ENCODE measurements at regions of chr6 and their contacts with region 1.

Region 1: DNA sequence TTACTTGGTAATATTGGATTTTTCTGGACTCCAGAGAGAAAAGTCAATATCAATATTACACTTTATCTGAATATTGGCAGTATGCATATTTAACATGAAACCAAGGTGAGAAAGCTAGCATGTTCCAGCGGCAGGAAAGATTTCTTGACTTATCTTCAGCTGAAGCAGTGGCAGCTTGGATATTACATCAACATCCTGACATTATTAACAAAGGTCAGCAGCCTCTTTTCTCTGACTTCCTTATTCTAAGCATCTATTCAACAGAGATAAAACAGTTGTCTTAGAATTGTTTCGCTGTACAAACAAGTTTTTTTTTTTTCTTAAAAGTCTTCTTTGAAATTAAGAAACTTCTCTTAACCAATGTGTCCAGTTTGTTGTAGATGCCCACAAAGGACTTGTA is 11.8 kb downstream of the DCBLD1 start:
- DNase-seq: no peak
- H3K4me3 Mint-ChIP-seq: no peak overlapping the region
- H3K27ac Mint-ChIP-seq: peak overlapping the region; percentile 36
- H3K4me1 Mint-ChIP-seq: peaks cover 71% of the 10 kb centered on the region
- H3K27me3 Mint-ChIP-seq: no peaks in the 10 kb centered on the region
- CTCF ChIP-seq: no peak

Region 2: GRCh38 chr6:116990679-116991078 is 503.6 kb before region 1 on chr6:
- CTCF ChIA-PET with region 1: no interaction called
- intact Hi-C with region 1: no loop called
- DNase-seq: no peak
- H3K4me3 Mint-ChIP-seq: no peak overlapping the region
- H3K27ac Mint-ChIP-seq: no peak overlapping the region
- H3K4me1 Mint-ChIP-seq: no peaks in the 10 kb centered on the region
- H3K27me3 Mint-ChIP-seq: no peaks in the 10 kb centered on the region
- CTCF ChIP-seq: no peak

Region 3: GRCh38 chr6:117264692-117265409 is 229.4 kb before region 1 on chr6:
- CTCF ChIA-PET with region 1: no interaction called
- intact Hi-C with region 1: no loop called
- DNase-seq: no peak
- H3K4me3 Mint-ChIP-seq: peak overlapping the region; percentile 60
- H3K27ac Mint-ChIP-seq: no peak overlapping the region
- H3K4me1 Mint-ChIP-seq: peaks cover 9% of the 10 kb centered on the region
- H3K27me3 Mint-ChIP-seq: peaks cover 55% of the 10 kb centered on the region
- CTCF ChIP-seq: no peak

Region 4: DNA sequence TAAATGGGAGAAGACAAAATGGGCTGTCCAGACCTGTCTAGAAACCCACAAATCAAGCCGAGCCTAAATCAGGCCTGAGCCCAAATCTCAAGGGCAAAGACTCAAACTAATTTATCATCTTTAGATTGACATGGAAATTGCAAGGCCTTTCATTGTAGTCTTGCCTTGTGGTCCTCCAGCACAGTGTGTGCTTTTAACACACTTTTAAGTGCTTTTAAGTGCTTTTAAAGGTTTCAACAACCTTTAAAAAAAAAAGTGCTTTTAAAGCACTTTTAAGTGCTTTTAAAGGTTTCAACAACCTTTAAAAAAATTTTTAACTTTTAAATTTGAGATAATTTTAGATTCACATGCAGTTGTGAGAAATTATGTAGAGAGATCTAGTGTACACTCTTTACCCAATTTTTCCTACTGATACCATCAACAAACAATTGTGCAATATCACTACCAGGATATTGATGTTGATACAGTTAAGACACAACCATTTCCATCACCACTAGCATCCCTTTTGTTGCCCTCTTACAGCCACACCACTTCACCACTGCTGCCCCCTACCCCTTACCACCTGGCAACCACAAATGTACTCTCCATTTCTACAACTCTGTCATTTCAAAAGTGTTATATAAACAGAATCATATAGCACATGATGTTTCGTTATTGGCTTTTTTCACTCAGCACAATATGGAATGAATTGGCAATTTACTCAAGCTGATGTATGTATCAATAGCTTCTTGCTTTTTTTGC is 34.9 kb before region 1 on chr6:
- CTCF ChIA-PET with region 1: no interaction called
- intact Hi-C with region 1: loop called (anchors 5 kb)
- DNase-seq: no peak
- H3K4me3 Mint-ChIP-seq: no peak overlapping the region
- H3K27ac Mint-ChIP-seq: no peak overlapping the region
- H3K4me1 Mint-ChIP-seq: peaks cover 26% of the 10 kb centered on the region
- H3K27me3 Mint-ChIP-seq: no peaks in the 10 kb centered on the region
- CTCF ChIP-seq: no peak

Measured in Calu3 (cell line).